Posterior vena cava (tissue), 2 donors: ENCODE measurements at regions of chr22 and their contacts with region 1.

Region 1: GRCh38 chr22:35840302-35840739 is 122.6 kb downstream of the APOL5 start:
- DNase-seq: peak; percentile 95

Region 2: DNA sequence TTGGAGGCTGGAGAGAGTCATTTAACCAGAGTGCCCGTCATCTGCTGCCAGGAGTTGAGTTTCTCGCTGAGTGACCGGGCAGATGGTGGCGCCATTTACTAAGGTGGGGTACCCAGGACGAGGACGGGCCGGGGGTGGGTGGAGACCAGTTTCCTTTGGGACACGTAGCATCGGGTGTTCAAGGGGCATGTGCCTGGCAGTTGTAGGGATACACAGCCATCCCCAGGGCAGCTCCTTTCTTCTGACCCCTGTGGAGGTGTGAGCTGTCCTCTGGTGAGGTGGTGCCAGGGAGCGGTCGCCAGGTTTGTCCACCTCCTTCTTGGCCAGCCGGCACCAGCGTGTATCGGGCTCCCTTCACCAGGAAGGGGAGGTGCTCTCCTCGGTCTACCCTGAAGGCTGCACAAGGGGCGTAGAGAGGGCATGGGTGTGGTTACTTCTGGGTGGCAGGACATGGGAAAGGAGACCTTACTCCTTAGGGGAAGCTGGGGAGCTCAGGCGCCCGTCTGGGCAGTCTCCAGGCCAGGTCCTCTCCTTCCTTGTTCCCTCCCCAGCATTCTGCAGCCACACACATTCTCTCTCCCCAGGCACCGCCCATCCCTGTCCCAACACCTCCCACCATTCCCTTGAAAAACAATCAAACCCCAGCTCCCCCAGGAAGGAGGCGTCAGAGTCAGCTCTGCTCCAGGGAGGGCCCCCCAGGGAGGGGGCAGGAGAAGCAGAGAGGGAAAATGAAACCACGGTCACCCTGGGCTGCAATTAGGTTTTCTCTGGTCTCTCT is 212.9 kb before region 1 on chr22:
- intact Hi-C with region 1: loop called in 1 of 2 experiments (anchors 10 kb)
- DNase-seq: peak; percentile 91

Region 3: GRCh38 chr22:35785181-35785923 is 55.0 kb before region 1 on chr22:
- intact Hi-C with region 1: loop called in 1 of 2 experiments (anchors 10 kb)
- DNase-seq: no peak